ENCODE measurements at regions of chr6 and their contacts with region 1.

Region 1: DNA sequence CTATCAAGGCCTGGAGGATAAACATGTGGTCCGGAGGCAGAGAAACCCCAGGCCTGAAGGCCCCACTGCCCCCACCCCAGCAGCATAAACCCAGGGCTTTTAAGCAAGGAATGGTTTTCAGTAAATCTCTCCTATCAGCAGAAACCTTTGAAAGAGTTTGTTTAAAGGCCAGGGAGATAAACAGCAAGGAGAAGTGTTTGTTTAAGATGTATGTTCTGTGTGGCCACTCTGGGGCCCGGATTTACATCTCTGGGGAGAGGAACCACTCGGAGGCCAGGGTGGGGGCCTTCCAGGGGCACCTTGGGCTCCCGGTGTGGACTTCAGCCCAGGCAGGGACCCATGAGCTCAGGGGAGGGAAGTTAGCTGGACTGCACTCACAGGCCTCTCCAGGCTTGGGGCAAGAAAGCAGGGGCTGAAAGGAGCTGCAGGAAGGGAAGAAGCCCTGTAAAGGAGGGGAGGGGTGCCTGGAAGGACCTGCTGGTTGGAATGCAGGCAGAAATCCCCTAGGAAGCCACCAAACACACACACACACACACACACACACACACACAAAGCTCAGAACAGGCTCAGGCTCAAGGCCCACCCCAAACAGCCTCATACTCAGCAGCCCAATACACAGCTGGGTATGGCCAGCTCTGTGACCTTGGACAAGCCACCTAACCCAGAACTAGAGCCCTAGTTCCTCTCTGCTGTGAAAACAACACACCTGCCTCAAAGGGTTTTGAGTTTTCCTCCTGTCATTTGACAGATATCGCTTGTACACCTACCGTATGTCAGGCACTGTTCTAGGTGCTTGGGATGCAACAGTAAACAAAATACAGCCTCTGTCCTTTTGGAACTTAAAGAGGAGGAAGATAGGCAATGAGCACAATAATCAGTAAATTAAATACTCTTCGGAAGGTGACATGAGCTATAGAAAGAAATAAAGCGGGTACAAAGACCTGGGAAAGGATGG is 26.2 kb upstream of the FOXP4 start:
- DNase-seq: peak; percentile 55
- H3K4me3 ChIP-seq: no peak overlapping the region
- H3K27ac ChIP-seq: peak overlapping the region; percentile 67 to 86 (median 80)
- H3K4me1 ChIP-seq: peaks cover 0 to 30% (median 22%) of the 10 kb centered on the region in 4 donors
- H3K27me3 ChIP-seq: peaks cover 17% of the 10 kb centered on the region
- CTCF ChIP-seq: no peak
- EP300 ChIP-seq: no peak
- POLR2A ChIP-seq: no peak

Region 2: GRCh38 chr6:41494212-41495110 is 25.6 kb before region 1 on chr6:
- in situ Hi-C with region 1: no loop called
- intact Hi-C with region 1: no loop called
- DNase-seq: no peak
- H3K4me3 ChIP-seq: no peak overlapping the region
- H3K27ac ChIP-seq: no peak overlapping the region
- H3K4me1 ChIP-seq: no peaks in the 10 kb centered on the region
- H3K27me3 ChIP-seq: no peaks in the 10 kb centered on the region
- CTCF ChIP-seq: no peak
- EP300 ChIP-seq: no peak
- POLR2A ChIP-seq: no peak

Region 3: GRCh38 chr6:41779793-41780545 is 259.9 kb after region 1 on chr6 and contains the start of gene FRS3:
- in situ Hi-C with region 1: no loop called
- intact Hi-C with region 1: loop called (anchors 5 kb)
- DNase-seq: peak; percentile 100
- H3K4me3 ChIP-seq: peak within 1 kb of the TSS; percentile 67 to 91 (median 84)
- H3K27ac ChIP-seq: peak within 1 kb of the TSS; percentile 88 to 96 (median 92)
- H3K4me1 ChIP-seq: peaks cover 13 to 23% (median 20%) of the 10 kb centered on the region in 4 donors
- H3K27me3 ChIP-seq: no peaks in the 10 kb centered on the region
- CTCF ChIP-seq: peak; percentile 83 to 97 (median 88)
- EP300 ChIP-seq: no peak
- POLR2A ChIP-seq: no peak
- total RNA-seq, gene FRS3: 2.8 to 4.5 (median 3.2) TPM

Measured in transverse colon (tissue), 4 donors.